ENCODE measurements at regions of chr5 and their contacts with region 1.

Region 1: DNA sequence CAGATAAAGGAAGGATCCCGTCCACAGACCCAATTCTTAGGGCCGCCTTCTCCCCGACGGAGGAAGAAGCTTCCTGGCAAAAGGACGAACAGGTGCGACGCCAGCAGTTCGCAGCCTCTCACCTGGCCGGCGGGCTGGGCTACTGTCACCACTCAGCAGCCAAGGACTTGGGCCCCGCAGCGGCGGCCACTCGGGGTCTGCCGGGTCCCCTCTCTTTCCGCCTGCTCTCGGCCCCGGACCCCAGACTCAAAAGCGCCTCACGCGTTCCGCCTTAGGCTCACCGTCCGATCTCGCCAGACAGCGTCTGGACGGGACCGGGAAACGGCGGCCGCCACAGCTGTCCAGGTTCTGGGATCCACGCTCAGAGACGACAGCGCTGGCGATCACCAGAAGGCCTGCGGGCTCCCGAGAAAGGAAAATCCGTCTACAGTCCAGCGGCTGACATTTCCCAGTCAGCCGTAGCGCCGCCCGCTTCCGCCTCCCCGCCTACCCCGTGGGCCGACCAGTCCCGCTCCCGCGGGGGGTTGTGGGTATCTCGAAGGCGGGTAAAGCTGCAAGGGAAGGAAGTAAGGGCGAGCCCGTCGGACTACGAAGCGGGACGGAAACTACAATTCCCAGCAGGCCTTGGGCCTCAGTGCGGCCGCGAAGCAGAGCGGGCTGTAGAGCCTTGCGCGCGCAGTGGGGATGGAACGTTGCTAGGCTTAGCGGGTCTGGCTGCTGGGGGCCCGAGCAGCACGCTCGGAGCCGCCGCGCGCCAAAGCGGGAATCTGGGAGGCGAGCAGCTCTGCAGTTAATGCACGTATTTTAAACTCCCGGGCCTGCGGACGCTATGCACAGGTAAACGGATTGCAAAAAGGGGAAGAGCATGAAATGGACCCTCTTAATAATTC is at the starts of genes LMBRD2 and SKP2:
- DNase-seq: peak; percentile 99
- H3K4me3 ChIP-seq: peak within 1 kb of the TSS; percentile 98
- H3K27ac ChIP-seq: peak within 1 kb of the TSS; percentile 86
- H3K4me1 ChIP-seq: peaks cover 5% of the 10 kb centered on the region
- H3K27me3 ChIP-seq: no peaks in the 10 kb centered on the region
- CTCF ChIP-seq: no peak
- total RNA-seq, gene LMBRD2: 12.7 to 17.5 TPM
- total RNA-seq, gene SKP2: 20.2 to 54.6 TPM

Region 2: DNA sequence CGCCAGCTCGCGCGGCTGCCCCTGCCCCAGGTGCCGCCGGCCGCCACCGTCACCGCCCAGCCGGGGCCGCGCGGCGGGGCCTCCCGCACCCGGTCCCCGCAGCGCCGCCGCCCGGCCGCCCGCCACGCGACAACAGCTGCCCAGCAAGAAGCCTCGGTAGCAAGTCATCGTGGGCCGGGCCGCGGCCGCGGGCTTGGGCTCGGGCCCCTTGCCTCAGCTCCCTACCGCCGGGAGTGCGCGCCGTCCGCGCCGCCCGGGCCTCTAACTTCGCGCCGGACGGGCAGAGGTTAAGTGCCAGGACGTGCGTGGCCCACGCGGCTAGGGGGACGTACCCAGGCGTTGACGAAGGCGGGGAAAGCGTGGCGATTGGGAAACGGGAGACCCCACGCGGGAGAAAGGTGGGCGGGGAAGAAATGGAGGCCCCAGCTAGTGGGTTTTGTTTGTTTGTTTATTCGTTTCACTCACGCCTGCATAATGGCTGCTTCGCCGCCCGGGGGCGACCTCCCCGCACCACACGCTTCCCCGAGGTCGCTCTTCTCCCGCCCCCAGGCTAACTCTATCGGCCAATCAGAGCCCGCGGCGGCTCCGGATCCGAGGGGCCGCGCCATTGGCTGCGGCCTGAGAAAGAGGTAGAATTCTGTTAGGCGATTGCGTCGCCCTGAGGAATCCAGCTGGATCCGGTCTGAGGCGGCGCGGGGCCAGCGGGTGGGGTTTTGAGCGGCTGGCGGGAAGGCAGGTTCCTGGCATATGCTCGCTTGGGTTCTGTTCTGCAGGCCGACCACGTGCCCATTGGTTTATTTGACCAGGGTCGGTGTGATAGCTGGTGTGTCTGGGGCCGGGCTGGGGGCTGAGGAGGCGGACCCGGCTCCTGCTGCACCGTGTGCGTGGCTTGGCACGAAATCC is 90.2 kb after region 1 on chr5 and contains the start of gene NADK2:
- intact Hi-C with region 1: loop called (anchors 5 kb)
- DNase-seq: peak; percentile 96
- H3K4me3 ChIP-seq: peak within 1 kb of the TSS; percentile 82
- H3K27ac ChIP-seq: peak within 1 kb of the TSS; percentile 93
- H3K4me1 ChIP-seq: peaks cover 4% of the 10 kb centered on the region
- H3K27me3 ChIP-seq: no peaks in the 10 kb centered on the region
- CTCF ChIP-seq: peak; percentile 36
- total RNA-seq, gene NADK2: 28.6 to 31.3 TPM